Naive thymus-derived CD4-positive, alpha-beta T cell (primary cell): ENCODE measurements at regions of chr4 and their contacts with region 1.

Region 1: GRCh38 chr4:142353149-142353738 is 492.9 kb downstream of the INPP4B start:
- DNase-seq: peak in 6 of 9 donors; percentile 21 to 50 (median 46)
- ATAC-seq: peak; percentile 61
- H3K4me3 ChIP-seq: no peak overlapping the region
- H3K4me3 Mint-ChIP-seq: peak overlapping the region in 9 of 10 donors; percentile 38 to 79 (median 70)
- H3K27ac ChIP-seq: peak overlapping the region; percentile 67
- H3K27ac Mint-ChIP-seq: peak overlapping the region; percentile 68 to 95 (median 92)
- H3K4me1 ChIP-seq: peaks cover 69 to 84% of the 10 kb centered on the region in 2 donors
- H3K4me1 Mint-ChIP-seq: peaks cover 58 to 100% (median 97%) of the 10 kb centered on the region in 7 donors
- H3K27me3 ChIP-seq: no peaks in the 10 kb centered on the region
- H3K27me3 Mint-ChIP-seq: no peaks in the 10 kb centered on the region

Region 2: DNA sequence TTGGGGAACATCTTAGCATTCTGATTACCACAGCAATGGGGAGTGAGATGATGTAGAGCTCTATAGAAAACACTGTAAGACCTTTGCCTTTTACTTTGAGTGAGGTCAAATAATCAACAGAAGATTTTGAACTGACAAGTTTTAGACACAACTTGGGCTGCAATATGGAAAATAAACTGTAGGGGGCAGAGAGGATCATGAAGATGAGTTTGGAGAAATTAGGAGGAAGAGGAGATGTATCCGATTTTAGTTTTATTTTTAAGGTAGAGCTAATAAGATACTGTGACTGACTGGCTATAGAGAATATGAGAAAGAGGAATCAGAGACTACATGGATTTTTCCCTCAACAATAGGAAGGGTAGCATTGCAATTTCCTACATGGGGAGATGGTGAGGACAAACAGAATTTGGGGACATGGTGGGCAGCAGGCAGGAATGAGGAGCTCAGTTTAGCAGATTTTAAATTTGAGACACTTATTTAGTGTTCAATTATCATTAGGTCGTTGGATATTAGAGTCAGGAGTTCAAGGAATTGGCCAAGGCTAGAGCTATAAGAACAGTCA is 70.3 kb before region 1 on chr4:
- CTCF ChIA-PET with region 1: interaction called, 17 read pairs
- POLR2A ChIA-PET with region 1: interaction called, 5 read pairs
- intact Hi-C with region 1: loop called (anchors 2 to 5 kb)
- DNase-seq: peak in 7 of 9 donors; percentile 26 to 53 (median 38)
- ATAC-seq: peak; percentile 64
- H3K4me3 ChIP-seq: no peak overlapping the region
- H3K4me3 Mint-ChIP-seq: no peak overlapping the region
- H3K27ac ChIP-seq: no peak overlapping the region
- H3K27ac Mint-ChIP-seq: no peak overlapping the region
- H3K4me1 ChIP-seq: peaks cover 7 to 15% of the 10 kb centered on the region in 2 donors
- H3K4me1 Mint-ChIP-seq: peaks cover 9 to 35% (median 25%) of the 10 kb centered on the region in 7 donors
- H3K27me3 ChIP-seq: no peaks in the 10 kb centered on the region
- H3K27me3 Mint-ChIP-seq: no peaks in the 10 kb centered on the region

Region 3: DNA sequence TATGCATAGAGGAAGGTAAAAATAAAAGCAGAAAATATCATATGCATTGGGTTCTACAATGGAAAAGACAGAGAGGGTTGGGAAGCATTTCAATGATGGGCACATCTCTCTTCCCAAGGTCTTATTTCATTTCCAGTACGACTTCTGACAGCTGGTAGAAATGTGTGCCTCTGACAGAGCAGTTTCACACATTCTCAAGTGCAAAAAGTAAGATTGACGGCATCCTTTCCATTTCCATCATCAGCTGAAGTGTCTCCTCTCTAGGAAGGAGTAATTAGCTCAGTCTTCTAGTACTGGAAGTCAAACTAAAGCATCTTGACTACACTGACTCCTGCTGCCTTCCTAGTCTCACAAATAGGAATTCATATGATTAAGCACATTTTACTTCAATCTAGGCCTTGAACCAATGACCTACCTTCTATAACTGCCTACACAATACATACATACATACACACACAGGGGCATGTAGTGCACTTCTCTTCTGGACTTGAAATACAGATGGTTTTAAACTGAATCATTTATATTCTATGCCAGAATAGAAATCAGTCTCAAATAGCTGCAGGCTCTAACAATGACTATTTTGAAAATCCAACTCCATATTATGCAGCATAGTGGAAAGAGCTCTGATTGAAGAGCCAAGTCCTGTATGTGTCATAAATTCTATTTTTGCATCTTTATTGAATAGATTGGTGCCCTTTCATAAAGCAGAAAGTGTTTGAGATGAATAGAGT is 19.5 kb after region 1 on chr4:
- CTCF ChIA-PET with region 1: interaction called, 5 read pairs
- POLR2A ChIA-PET with region 1: interaction called, 38 read pairs
- intact Hi-C with region 1: loop called (anchors 1 kb)
- DNase-seq: no peak
- ATAC-seq: peak; percentile 22
- H3K4me3 ChIP-seq: no peak overlapping the region
- H3K4me3 Mint-ChIP-seq: peak overlapping the region in 7 of 10 donors; percentile 14 to 48 (median 34)
- H3K27ac ChIP-seq: no peak overlapping the region
- H3K27ac Mint-ChIP-seq: peak overlapping the region; percentile 5 to 87 (median 38)
- H3K4me1 ChIP-seq: peaks cover 53 to 64% of the 10 kb centered on the region in 2 donors
- H3K4me1 Mint-ChIP-seq: peaks cover 46 to 96% (median 91%) of the 10 kb centered on the region in 7 donors
- H3K27me3 ChIP-seq: no peaks in the 10 kb centered on the region
- H3K27me3 Mint-ChIP-seq: no peaks in the 10 kb centered on the region

Region 4: GRCh38 chr4:142416711-142417275 is 63.5 kb after region 1 on chr4:
- CTCF ChIA-PET with region 1: interaction called, 6 read pairs
- POLR2A ChIA-PET with region 1: interaction called, 13 read pairs
- intact Hi-C with region 1: loop called (anchors 1 kb)
- DNase-seq: peak in 7 of 9 donors; percentile 18 to 64 (median 55)
- ATAC-seq: peak; percentile 90
- H3K4me3 ChIP-seq: peak overlapping the region; percentile 50
- H3K4me3 Mint-ChIP-seq: peak overlapping the region; percentile 22 to 90 (median 79)
- H3K27ac ChIP-seq: peak overlapping the region; percentile 64
- H3K27ac Mint-ChIP-seq: peak overlapping the region; percentile 77 to 98 (median 94)
- H3K4me1 ChIP-seq: peaks cover 25 to 37% of the 10 kb centered on the region in 2 donors
- H3K4me1 Mint-ChIP-seq: peaks cover 21 to 75% (median 60%) of the 10 kb centered on the region in 7 donors
- H3K27me3 ChIP-seq: no peaks in the 10 kb centered on the region
- H3K27me3 Mint-ChIP-seq: no peaks in the 10 kb centered on the region

Region 5: GRCh38 chr4:142443469-142443868 is 90.2 kb after region 1 on chr4:
- CTCF ChIA-PET with region 1: no interaction called
- POLR2A ChIA-PET with region 1: no interaction called
- intact Hi-C with region 1: no loop called
- DNase-seq: peak in 1 of 9 donors; percentile 20
- ATAC-seq: no peak
- H3K4me3 ChIP-seq: no peak overlapping the region
- H3K4me3 Mint-ChIP-seq: no peak overlapping the region
- H3K27ac ChIP-seq: no peak overlapping the region
- H3K27ac Mint-ChIP-seq: peak overlapping the region in 1 of 9 donors; percentile 19
- H3K4me1 ChIP-seq: peaks cover 0 to 14% of the 10 kb centered on the region in 2 donors
- H3K4me1 Mint-ChIP-seq: peaks cover 10 to 47% (median 36%) of the 10 kb centered on the region in 7 donors
- H3K27me3 ChIP-seq: no peaks in the 10 kb centered on the region
- H3K27me3 Mint-ChIP-seq: no peaks in the 10 kb centered on the region

Region 6: GRCh38 chr4:142713282-142714030 is 360.2 kb after region 1 on chr4:
- CTCF ChIA-PET with region 1: interaction called, 29 read pairs
- POLR2A ChIA-PET with region 1: interaction called, 8 read pairs
- intact Hi-C with region 1: no loop called
- DNase-seq: no peak
- ATAC-seq: no peak
- H3K4me3 ChIP-seq: no peak overlapping the region
- H3K4me3 Mint-ChIP-seq: peak overlapping the region; percentile 20 to 81 (median 57)
- H3K27ac ChIP-seq: peak overlapping the region; percentile 41
- H3K27ac Mint-ChIP-seq: peak overlapping the region; percentile 61 to 95 (median 90)
- H3K4me1 ChIP-seq: peaks cover 6 to 31% of the 10 kb centered on the region in 2 donors
- H3K4me1 Mint-ChIP-seq: peaks cover 22 to 90% (median 67%) of the 10 kb centered on the region in 7 donors
- H3K27me3 ChIP-seq: no peaks in the 10 kb centered on the region
- H3K27me3 Mint-ChIP-seq: no peaks in the 10 kb centered on the region

Region 7: DNA sequence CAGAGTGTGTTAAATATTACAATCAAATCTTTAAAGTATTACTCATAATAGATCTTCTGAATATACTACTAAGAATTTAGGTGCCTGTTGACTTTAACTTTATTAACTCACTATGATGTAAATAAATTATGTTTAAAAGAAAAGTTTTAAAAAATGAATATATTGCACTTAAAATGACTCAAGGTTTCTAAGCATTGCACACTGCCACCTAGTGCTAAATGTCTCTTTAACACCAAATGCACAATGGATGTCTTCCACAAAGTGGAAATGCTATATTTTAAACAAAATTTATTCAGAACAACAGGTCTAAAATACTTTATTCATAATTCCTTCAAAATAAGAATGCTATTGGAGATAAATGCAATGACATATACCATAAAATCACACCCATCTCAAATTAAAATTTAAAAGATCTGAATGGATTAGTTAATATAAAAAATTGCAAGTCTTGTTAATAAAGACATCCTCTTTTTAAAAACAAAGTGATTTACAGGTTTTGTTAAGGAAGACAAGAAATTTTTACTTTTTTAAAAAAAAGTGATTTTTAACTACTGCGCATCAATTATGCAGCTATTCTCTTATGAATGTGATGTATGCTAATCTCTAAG is 487.4 kb after region 1 on chr4:
- CTCF ChIA-PET with region 1: interaction called, 5 read pairs
- POLR2A ChIA-PET with region 1: no interaction called
- intact Hi-C with region 1: loop called (anchors 1 kb)
- DNase-seq: peak in 5 of 9 donors; percentile 20 to 46 (median 35)
- ATAC-seq: peak; percentile 37
- H3K4me3 ChIP-seq: no peak overlapping the region
- H3K4me3 Mint-ChIP-seq: no peak overlapping the region
- H3K27ac ChIP-seq: no peak overlapping the region
- H3K27ac Mint-ChIP-seq: no peak overlapping the region
- H3K4me1 ChIP-seq: peaks cover 0 to 5% of the 10 kb centered on the region in 2 donors
- H3K4me1 Mint-ChIP-seq: peaks cover 6 to 27% (median 18%) of the 10 kb centered on the region in 7 donors
- H3K27me3 ChIP-seq: no peaks in the 10 kb centered on the region
- H3K27me3 Mint-ChIP-seq: peaks cover 0 to 8% (median 0%) of the 10 kb centered on the region in 5 donors

Region 8: GRCh38 chr4:143441678-143442077 is 1088.4 kb after region 1 on chr4:
- CTCF ChIA-PET with region 1: no interaction called
- POLR2A ChIA-PET with region 1: no interaction called
- intact Hi-C with region 1: no loop called
- DNase-seq: no peak
- ATAC-seq: no peak
- H3K4me3 ChIP-seq: no peak overlapping the region
- H3K4me3 Mint-ChIP-seq: no peak overlapping the region
- H3K27ac ChIP-seq: no peak overlapping the region
- H3K27ac Mint-ChIP-seq: no peak overlapping the region
- H3K4me1 ChIP-seq: no peaks in the 10 kb centered on the region
- H3K4me1 Mint-ChIP-seq: no peaks in the 10 kb centered on the region
- H3K27me3 ChIP-seq: no peaks in the 10 kb centered on the region
- H3K27me3 Mint-ChIP-seq: peaks cover 0 to 7% (median 4%) of the 10 kb centered on the region in 5 donors